ENCODE measurements at regions of chr17 and their contacts with region 1.

Region 1: DNA sequence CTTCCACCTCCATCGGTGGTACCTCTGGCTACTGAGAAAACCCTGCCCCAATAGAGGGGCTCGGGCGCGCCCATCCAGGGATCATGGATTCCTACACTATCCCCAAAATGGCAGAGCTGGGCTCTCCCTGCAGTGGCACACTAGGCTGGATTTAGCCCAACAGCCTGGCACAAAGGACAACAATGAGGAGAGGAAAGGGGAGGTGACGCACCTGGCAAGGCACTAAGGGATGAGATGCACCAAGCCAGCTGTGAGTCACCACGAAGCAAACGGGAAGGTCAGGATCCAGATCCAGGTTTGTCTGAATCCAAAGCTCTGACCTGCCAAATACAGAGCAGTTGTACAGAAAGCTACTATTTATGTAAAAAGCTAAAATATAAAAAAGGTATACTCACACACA is 18.1 kb downstream of the UBE2O start:
- DNase-seq: no peak
- H3K4me3 ChIP-seq: no peak overlapping the region
- H3K27ac ChIP-seq: no peak overlapping the region
- H3K4me1 ChIP-seq: peaks cover 0 to 19% (median 15%) of the 10 kb centered on the region in 4 experiments
- H3K27me3 ChIP-seq: no peaks in the 10 kb centered on the region
- CTCF ChIP-seq: no peak
- EP300 ChIP-seq: no peak
- POLR2A ChIP-seq: no peak
- RAD21 ChIP-seq: no peak

Region 2: DNA sequence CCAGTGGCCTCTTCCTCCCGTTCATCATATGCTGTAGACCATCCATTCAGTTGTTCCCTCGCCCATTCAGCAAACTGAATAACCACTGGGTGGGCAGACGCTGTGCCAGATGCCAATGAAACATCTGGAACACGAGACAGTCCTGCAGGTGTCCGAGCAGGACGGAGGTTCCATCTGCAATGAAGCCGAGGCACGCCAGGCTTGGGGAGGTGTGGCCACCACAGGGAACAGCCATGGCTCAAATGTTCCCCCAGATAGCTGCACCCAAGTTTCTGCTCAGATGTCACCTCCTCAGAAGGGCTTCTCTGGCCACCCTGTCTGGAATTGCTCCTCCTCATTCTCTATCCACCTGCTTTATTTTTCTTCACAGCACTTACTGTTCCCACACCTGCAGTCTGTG is 12.5 kb before region 1 on chr17:
- CTCF ChIA-PET with region 1: interaction called, 14 read pairs
- POLR2A ChIA-PET with region 1: no interaction called
- DNase-seq: no peak
- H3K4me3 ChIP-seq: no peak overlapping the region
- H3K27ac ChIP-seq: no peak overlapping the region; the same call in 1 of the 2 replicates
- H3K4me1 ChIP-seq: peaks cover 0 to 8% (median 5%) of the 10 kb centered on the region in 4 experiments; a peak in 6 of 7 replicates
- H3K27me3 ChIP-seq: no peaks in the 10 kb centered on the region
- CTCF ChIP-seq: no peak
- EP300 ChIP-seq: peak in 1 of 2 experiments; percentile 53; a peak in 1 of 3 replicates
- POLR2A ChIP-seq: no peak
- RAD21 ChIP-seq: no peak

Region 3: GRCh38 chr17:76540381-76541300 is 105.8 kb after region 1 on chr17:
- CTCF ChIA-PET with region 1: no interaction called
- POLR2A ChIA-PET with region 1: no interaction called
- DNase-seq: peak; percentile 88 to 92
- H3K4me3 ChIP-seq: peak overlapping the region; percentile 12 to 50 (median 32); a peak in 7 of 8 replicates
- H3K27ac ChIP-seq: no peak overlapping the region
- H3K4me1 ChIP-seq: peaks cover 0 to 27% (median 16%) of the 10 kb centered on the region in 4 experiments; a peak in 6 of 7 replicates
- H3K27me3 ChIP-seq: peaks cover 8 to 42% (median 35%) of the 10 kb centered on the region in 4 experiments
- CTCF ChIP-seq: peak in 1 of 3 experiments; percentile 28; a peak in 1 of 4 replicates
- EP300 ChIP-seq: no peak
- POLR2A ChIP-seq: no peak
- RAD21 ChIP-seq: no peak

Measured in H1 (cell line).